ENCODE measurements at regions of chr1 and their contacts with region 1.

Region 1: DNA sequence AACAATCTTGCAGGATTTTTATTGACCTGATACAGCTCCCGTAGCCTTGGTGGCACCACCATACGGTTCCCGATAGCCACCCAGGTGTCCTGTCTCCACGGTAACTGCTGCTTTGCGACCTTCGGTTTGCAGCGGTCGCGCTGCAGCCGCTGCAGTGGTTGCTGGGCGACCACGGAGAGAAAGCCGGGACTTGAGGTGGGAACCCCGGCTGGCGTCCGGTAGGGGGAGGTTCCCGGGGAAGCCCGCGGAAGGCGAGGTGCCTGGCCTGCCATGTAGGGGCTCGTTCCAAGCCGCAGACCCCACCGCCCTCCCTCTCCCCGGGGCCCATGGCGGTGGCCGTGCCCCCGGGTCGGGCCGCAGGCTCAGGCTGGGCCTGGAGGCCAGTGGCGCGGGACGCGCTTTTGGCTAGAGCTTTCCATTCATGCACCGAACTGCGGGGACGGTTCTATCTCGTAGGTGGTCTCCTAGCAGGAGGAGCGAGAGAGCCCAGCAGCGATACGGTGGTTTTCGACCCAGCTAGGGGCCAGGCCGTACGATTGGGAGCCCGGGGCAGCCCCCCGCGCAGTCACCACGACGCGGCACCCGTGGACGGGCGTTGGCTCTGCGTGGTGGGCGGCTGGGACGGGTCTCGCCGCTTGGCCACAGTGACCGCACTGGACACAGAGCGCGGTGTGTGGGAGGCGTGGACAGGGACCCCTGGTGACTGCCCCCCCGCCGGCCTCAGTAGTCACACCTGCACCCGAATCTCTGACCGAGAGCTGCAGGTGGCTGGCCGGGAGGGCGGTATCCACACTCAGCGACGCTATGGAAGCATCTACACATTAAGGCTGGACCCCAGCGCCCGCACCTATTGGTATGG is at the start of gene KLHDC9:
- DNase-seq: peak; percentile 85
- H3K4me3 Mint-ChIP-seq: peak within 1 kb of the TSS; percentile 81
- H3K27ac Mint-ChIP-seq: peak within 1 kb of the TSS; percentile 89
- H3K4me1 Mint-ChIP-seq: peaks cover 26% of the 10 kb centered on the region
- H3K27me3 Mint-ChIP-seq: peaks cover 41% of the 10 kb centered on the region

Region 2: DNA sequence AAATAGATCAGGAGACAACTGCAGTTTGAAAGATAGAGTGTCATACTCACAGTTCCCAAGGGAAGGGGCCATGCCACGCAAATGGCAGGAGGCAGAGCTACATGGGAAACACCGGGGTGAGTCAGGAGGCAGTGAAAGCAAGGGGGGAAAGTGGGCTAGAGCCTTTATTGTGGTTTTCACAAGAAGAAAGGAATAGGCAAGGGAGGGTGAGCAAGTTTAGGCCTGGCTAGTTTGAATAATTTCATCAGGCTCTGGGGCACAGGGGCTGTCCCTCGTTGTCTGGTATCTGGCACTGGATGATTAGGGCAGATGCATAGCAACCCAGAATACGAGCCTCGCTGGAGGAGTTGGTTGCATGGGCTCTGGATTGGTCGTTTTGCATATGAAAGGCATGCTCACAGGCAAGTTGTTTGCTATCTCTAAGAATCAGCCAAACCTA is 126.8 kb before region 1 on chr1:
- CTCF ChIA-PET with region 1: no interaction called
- DNase-seq: no peak
- H3K4me3 Mint-ChIP-seq: no peak overlapping the region
- H3K27ac Mint-ChIP-seq: no peak overlapping the region
- H3K4me1 Mint-ChIP-seq: no peaks in the 10 kb centered on the region
- H3K27me3 Mint-ChIP-seq: peaks cover 31% of the 10 kb centered on the region

Region 3: DNA sequence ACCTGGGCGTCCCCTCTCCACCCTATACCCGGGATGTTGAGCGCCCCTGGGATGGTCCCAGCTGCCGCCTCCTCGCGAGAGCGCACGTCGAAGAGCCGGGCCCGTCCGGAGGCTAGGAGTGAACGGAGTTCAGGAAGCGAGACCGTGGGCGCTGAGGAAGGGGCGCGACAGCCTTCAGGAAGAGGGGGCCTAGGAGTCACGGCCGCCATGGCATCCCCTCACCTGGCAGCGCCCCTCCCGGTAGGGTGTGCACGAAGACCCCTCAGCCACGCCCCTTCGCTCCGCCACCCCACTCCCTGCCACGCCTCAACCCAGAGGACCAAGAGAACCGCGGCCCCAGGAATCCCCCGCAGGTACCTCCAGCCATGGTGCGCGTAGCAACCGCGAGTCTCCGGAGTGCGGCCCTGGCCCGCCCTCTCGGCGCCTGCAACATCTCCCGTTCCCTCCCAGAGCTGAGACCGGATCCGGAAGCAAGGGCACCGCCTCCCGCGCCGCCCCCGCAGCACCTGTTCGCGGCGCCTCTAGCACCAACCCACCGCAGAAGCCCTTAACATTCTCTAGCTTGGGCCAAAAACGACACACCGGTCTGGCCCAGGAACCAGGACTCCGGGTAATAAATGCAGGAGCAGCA is 59.8 kb before region 1 on chr1 and contains the start of gene TSTD1:
- CTCF ChIA-PET with region 1: interaction called, 65 read pairs
- DNase-seq: peak; percentile 91
- H3K4me3 Mint-ChIP-seq: peak within 1 kb of the TSS; percentile 92
- H3K27ac Mint-ChIP-seq: peak within 1 kb of the TSS; percentile 95
- H3K4me1 Mint-ChIP-seq: peaks cover 48% of the 10 kb centered on the region
- H3K27me3 Mint-ChIP-seq: no peaks in the 10 kb centered on the region

Region 4: GRCh38 chr1:161054805-161055204 is 43.6 kb before region 1 on chr1:
- CTCF ChIA-PET with region 1: interaction called, 19 read pairs
- DNase-seq: no peak
- H3K4me3 Mint-ChIP-seq: no peak overlapping the region
- H3K27ac Mint-ChIP-seq: no peak overlapping the region
- H3K4me1 Mint-ChIP-seq: peaks cover 21% of the 10 kb centered on the region
- H3K27me3 Mint-ChIP-seq: no peaks in the 10 kb centered on the region

Region 5: GRCh38 chr1:161083743-161084571 is 14.5 kb before region 1 on chr1:
- CTCF ChIA-PET with region 1: interaction called, 12 read pairs
- DNase-seq: no peak
- H3K4me3 Mint-ChIP-seq: no peak overlapping the region
- H3K27ac Mint-ChIP-seq: no peak overlapping the region
- H3K4me1 Mint-ChIP-seq: peaks cover 2% of the 10 kb centered on the region
- H3K27me3 Mint-ChIP-seq: peaks cover 51% of the 10 kb centered on the region

Measured in activated naive CD4-positive, alpha-beta T cell treated with anti-CD3 and anti-CD28 coated beads, Interleukin-2, amount 10 ng/mL, durations not matched to agents 7 days and 5 days (primary cell).